Naive thymus-derived CD4-positive, alpha-beta T cell (primary cell): ENCODE measurements at regions of chr10 and their contacts with region 1.

Region 1: GRCh38 chr10:53052521-53053164 is 280.1 kb upstream of the MBL2 start:
- DNase-seq: no peak
- ATAC-seq: no peak
- H3K4me3 ChIP-seq: no peak overlapping the region
- H3K4me3 Mint-ChIP-seq: no peak overlapping the region
- H3K27ac ChIP-seq: no peak overlapping the region
- H3K27ac Mint-ChIP-seq: no peak overlapping the region
- H3K4me1 ChIP-seq: no peaks in the 10 kb centered on the region
- H3K4me1 Mint-ChIP-seq: no peaks in the 10 kb centered on the region
- H3K27me3 ChIP-seq: no peaks in the 10 kb centered on the region
- H3K27me3 Mint-ChIP-seq: no peaks in the 10 kb centered on the region

Region 2: GRCh38 chr10:53013201-53013810 is 39.3 kb before region 1 on chr10:
- CTCF ChIA-PET with region 1: no interaction called
- POLR2A ChIA-PET with region 1: no interaction called
- intact Hi-C with region 1: loop called in 1 of 2 experiments (anchors 2 kb)
- DNase-seq: no peak
- ATAC-seq: no peak
- H3K4me3 ChIP-seq: no peak overlapping the region
- H3K4me3 Mint-ChIP-seq: no peak overlapping the region
- H3K27ac ChIP-seq: no peak overlapping the region
- H3K27ac Mint-ChIP-seq: no peak overlapping the region
- H3K4me1 ChIP-seq: no peaks in the 10 kb centered on the region
- H3K4me1 Mint-ChIP-seq: no peaks in the 10 kb centered on the region
- H3K27me3 ChIP-seq: no peaks in the 10 kb centered on the region
- H3K27me3 Mint-ChIP-seq: no peaks in the 10 kb centered on the region